Left colon (tissue), 2 donors: ENCODE measurements at regions of chr5 and their contacts with region 1.

Region 1: DNA sequence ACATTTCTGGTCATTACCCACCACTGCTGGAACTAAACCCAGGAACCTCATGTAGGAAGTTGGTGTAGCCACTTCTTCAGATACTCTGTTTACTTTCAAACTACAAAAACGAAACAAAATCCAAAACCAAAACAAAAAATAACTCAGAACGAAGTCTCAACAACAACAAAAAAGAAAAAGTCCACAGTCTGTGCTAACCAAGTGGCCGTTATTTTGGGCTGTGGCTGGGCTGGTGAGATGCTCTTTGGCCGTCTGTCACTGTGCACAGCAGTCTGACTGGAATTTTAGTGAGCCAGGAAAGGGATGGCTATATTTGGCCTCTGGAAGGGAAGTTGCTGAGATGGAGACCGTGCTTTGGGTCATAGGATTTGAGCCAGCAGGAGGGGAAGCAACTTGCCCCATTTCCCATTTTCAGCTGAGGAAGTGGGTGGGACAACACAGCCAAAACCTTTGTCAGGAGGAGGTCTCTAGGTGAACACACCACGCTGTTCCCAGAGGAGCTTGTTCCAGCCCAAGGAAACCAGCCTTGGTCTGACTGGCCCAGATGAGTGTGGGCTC is 334.1 kb downstream of the ZSWIM6 start:
- DNase-seq: no peak
- ATAC-seq: no peak

Region 2: DNA sequence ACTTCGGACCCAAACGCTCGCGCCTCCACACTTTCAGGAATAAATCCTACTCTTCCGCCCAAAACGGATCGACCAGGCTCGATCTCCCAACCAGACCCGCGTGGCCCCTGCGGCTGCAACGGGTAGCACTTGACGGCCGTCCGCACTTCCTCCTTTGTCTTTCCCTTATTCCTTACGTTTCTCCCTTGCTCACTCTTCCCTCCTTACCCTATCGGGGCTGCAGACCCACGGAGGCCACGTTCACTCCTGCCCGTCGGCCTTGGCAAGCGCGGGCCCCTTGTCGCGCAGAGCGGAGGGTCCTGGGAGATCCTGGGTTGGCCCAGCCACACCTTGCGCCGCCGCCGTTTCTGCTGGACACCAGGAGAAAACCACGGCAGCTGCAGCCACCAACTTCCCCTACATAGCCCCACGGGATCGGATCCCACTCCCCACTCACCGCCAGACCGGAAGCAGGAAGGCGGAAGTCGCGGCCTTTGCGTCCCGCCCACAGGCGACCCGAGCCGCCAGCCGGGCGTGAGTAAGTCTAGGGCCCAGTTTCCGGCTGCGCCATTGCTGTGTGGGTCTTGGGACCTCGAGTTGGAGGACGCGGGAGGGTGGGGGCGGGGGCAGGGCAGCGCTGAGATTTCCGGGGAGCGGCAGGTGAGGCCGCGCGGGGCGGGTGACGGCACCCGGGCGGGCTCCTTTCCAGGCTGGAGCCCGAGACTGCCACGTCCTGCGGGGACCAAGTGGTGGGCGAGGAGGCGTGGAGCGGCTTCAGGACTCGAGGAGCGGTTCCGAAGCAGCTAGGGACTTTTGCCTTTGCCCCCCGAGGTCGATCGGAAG is 503.9 kb before region 1 on chr5 and contains the start of gene SMIM15:
- intact Hi-C with region 1: loop called in 1 of 2 experiments (anchors 10 kb)
- DNase-seq: peak; percentile 93
- ATAC-seq: peak; percentile 95
- total RNA-seq, gene SMIM15: 110 to 115 TPM